ENCODE measurements at regions of chr5 and their contacts with region 1.

Region 1: DNA sequence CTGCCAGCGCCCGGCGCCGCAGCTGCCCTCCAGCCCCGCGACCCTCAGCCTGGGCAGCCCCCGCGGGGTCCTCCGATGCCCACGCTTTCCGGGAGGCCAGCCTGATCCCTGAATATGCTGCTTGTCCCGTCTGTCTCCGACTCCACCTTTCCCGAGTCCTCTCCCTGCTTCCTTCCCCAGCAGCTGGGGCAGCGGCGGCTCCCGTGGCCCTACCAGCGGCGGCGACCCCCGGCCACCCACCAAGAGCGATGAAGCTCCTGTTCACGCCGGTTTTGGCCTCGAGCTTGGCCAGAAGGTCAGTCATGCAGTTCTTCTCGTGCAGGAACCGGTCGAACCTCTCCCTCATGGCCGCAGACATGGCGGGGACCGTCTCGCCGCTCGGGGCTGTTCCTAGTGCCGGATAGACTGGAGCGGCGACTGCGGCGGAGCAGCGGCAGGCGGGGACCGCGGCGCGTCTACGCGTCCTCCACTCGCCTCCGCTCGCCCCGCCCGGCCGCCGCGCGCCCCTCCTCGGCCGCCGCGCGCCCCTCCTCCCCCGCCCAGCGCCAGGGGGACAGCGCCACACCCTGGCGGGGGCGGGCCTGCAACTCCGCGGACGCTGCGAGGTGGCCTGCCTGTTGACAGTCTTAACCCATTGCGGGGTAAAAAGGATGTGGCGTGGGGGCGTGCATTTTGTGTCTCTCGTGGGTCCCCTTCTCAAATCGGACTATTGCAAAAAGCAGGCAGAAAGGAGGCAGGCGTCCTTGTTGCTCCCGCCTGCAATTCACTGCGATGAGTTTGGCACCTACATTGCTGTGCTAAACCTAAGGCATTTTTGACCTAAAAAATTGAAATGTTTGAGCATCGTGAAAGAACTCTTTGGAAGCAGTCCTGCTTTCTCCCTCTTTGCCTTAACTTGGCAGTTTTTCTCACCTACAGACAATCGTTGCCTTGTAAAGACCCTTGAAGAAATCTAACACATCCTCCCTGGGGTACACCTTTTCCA is at the start of gene REEP5:
- DNase-seq: peak; percentile 83
- H3K4me3 ChIP-seq: peak within 1 kb of the TSS; percentile 95 to 97
- H3K27ac ChIP-seq: peak within 1 kb of the TSS; percentile 96
- H3K4me1 ChIP-seq: peaks cover 4% of the 10 kb centered on the region
- H3K27me3 ChIP-seq: no peaks in the 10 kb centered on the region
- CTCF ChIP-seq: peak; percentile 82 to 89 (median 88)
- POLR2A ChIP-seq: peak; percentile 86
- total RNA-seq, gene REEP5: 61.0 to 164 TPM

Region 2: DNA sequence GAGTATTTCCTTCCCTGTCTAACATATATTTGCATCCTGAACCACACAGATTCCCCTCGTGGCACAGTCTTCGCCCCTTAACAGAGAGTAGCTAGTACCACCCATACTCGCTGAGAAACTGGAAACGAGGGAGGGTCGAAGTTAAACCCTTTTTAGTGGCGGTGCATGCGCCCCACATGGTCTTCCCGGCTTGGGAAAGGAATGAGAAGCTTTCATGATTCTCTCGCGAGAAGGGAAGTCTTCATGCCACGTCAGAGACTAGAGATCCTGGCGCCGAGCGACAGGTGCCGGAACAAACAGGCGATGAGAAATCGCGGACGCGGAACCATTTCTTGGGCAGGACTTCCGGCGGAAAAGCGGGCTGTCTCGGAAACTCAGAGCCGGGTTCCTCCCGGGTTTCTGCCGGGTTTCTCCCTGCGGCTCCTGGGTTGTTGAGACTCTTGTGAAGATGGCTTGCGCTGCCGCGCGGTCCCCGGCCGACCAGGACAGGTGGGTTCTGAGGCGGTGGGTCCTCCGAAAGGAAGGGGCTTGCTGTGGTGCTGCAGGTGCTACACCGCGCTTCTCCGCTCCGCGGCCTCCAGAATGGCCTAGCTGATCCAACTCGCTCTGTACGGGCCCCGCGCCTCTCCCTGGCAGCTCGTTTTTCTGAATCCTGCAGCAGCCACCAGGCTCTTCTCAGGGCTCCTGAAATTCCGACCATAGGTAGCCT is 61.0 kb before region 1 on chr5 and contains the start of gene SRP19:
- intact Hi-C with region 1: loop called (anchors 5 kb)
- DNase-seq: peak; percentile 94
- H3K4me3 ChIP-seq: peak within 1 kb of the TSS; percentile 74 to 92
- H3K27ac ChIP-seq: peak within 1 kb of the TSS; percentile 67 to 73
- H3K4me1 ChIP-seq: peaks cover 8% of the 10 kb centered on the region
- H3K27me3 ChIP-seq: no peaks in the 10 kb centered on the region
- CTCF ChIP-seq: peak in 1 of 4 experiments; percentile 5
- POLR2A ChIP-seq: peak; percentile 45
- total RNA-seq, gene SRP19: 25.3 to 95.0 TPM

Region 3: DNA sequence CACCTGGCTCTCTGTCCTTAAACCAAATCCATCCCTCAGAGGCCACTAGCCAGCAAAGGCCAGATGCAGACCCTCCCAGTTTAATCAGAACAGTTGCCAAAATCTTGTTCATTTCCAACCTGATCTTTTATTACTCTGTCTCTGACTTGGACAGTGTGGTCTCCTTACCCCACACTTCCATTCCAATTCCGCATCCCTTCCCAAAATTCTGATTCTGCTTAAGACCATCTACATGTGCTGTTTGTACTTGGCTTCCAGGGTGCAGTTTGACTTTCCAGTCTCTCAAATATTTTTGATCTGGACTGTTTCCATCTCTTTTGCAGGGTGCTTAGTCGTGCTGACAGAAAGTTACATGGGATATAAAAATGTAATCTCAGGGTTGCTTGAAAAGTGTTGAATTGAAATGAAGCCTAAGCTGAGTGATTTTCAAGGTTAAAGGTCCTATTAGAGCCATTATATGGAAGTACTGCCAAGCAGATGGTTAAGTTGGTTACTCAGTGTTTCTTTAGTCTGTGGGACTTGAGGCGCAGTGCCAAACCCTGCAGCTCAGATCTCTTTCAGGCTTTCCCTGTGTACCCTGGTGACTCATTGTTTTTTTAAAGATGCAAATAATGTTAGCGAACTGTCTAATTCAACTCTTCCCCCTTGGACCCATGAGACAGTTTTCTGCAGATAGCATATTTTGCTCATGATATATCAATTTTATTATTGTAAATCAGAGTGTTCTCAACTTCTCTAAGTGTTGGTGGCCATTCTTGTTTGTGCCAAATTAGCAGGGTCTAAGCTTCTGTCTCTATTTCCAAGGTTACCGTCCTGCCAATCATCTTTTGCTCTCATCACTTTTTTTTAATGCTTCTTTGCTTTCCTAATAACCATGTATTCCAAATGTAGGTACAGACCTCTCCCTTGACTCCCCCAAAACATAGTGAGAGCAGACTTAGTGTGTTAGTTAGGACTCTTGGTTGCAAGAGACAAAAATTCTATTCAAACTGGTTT is 36.3 kb after region 1 on chr5:
- intact Hi-C with region 1: loop called (anchors 5 kb)
- DNase-seq: peak; percentile 88
- H3K4me3 ChIP-seq: no peak overlapping the region
- H3K27ac ChIP-seq: peak overlapping the region; percentile 44 to 45
- H3K4me1 ChIP-seq: no peaks in the 10 kb centered on the region
- H3K27me3 ChIP-seq: no peaks in the 10 kb centered on the region
- CTCF ChIP-seq: no peak
- POLR2A ChIP-seq: no peak

Region 4: DNA sequence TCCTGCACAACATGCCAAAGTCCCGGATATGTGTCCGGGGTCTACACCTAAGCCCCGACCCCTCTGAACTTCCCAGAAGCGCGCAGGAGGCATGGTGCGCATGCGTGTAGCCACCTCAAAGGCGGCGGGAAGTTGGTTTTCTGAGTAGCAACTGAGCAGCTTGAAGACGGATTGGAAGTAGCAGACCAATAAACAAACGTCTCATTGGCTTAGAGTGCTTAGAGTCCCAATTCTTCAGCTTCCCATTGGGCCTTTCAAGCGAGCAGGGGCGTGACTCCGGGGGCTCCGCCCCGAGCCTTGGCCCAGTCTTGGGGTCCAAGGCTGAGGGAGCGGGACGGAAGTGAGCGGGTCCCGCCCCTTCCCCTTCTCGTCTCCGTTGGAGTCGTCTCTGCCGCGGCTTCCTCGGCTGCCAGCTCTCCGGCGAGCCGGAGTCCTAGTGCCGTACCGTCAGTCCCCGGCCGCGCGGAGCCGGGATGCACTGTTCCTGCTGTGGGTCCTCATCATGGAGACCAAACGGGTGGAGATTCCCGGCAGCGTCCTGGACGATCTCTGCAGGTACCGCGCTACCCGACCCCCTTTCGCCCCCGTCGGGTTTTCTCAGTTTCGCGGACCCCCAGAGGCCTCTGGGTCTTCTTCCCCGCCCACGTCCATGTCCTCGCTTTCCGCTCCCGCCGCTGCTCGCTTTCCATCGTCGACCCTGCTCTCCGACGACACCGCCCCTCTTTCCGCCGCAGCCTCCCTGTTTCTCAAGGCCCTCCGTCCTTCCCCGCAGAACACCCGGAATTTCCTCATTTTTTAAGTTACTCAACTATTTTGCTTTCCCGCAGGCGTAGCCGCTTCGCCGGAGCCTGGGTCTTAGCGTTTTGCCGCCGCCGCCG is 54.5 kb after region 1 on chr5 and contains the start of gene DCP2:
- intact Hi-C with region 1: loop called (anchors 5 kb)
- DNase-seq: peak; percentile 96
- H3K4me3 ChIP-seq: peak within 1 kb of the TSS; percentile 76 to 79
- H3K27ac ChIP-seq: peak within 1 kb of the TSS; percentile 86 to 89
- H3K4me1 ChIP-seq: no peaks in the 10 kb centered on the region
- H3K27me3 ChIP-seq: no peaks in the 10 kb centered on the region
- CTCF ChIP-seq: no peak
- POLR2A ChIP-seq: peak; percentile 86
- total RNA-seq, gene DCP2: 23.4 to 51.6 TPM